PC-3 (cell line): ENCODE measurements at regions of chr12 and their contacts with region 1.

Region 1: GRCh38 chr12:117143008-117143532 is 43.9 kb upstream of the TESC start:
- DNase-seq: peak; percentile 99
- ATAC-seq: peak; percentile 88
- H3K4me3 ChIP-seq: peak overlapping the region; percentile 45
- H3K27ac ChIP-seq: peak overlapping the region; percentile 92
- H3K4me1 ChIP-seq: peaks cover 32% of the 10 kb centered on the region
- H3K27me3 ChIP-seq: no peaks in the 10 kb centered on the region
- CTCF ChIP-seq: no peak

Region 2: GRCh38 chr12:116799955-116800354 is 343.1 kb before region 1 on chr12:
- CTCF ChIA-PET with region 1: no interaction called
- POLR2A ChIA-PET with region 1: no interaction called
- intact Hi-C with region 1: no loop called
- DNase-seq: no peak
- ATAC-seq: no peak
- H3K4me3 ChIP-seq: no peak overlapping the region
- H3K27ac ChIP-seq: no peak overlapping the region
- H3K4me1 ChIP-seq: no peaks in the 10 kb centered on the region
- H3K27me3 ChIP-seq: no peaks in the 10 kb centered on the region
- CTCF ChIP-seq: no peak

Region 3: DNA sequence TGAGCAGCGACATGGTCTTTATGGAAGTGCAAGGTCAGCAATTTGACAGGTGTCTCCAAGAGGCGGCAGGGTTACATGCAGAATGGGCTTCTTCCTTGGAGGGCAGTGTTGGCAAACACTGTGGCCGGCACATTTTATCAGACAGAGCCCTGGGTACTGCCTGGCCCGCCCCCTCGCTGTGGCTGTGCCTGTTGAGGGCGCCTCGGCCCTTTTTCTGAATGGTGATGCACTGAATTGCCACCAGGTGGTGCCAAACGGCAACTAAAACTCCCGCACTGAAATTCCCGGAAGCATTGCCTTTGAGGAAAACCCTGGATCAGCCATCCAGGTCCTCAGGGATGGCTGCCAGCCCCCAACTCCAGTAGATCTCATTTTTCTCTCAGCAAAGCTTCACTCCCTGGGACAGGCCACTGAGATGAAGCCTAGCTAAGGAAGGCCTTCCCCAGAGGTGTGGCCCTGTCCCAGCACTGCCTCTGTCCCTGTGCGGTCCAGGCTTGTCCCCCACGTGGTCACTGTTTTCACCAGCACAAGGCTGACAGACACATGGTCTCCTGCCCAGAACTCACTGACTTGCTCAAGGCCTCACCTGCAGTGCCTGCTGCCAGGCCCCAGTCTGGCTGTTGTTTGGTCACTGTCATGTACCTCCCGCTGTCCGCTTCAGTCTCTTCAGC is 117.5 kb before region 1 on chr12:
- CTCF ChIA-PET with region 1: interaction called, 3 read pairs
- POLR2A ChIA-PET with region 1: no interaction called
- intact Hi-C with region 1: loop called (anchors 5 kb)
- DNase-seq: peak; percentile 82
- ATAC-seq: peak; percentile 92
- H3K4me3 ChIP-seq: no peak overlapping the region
- H3K27ac ChIP-seq: no peak overlapping the region
- H3K4me1 ChIP-seq: no peaks in the 10 kb centered on the region
- H3K27me3 ChIP-seq: no peaks in the 10 kb centered on the region
- CTCF ChIP-seq: peak; percentile 98

Region 4: GRCh38 chr12:117119592-117120198 is 23.4 kb before region 1 on chr12:
- CTCF ChIA-PET with region 1: no interaction called
- POLR2A ChIA-PET with region 1: no interaction called
- intact Hi-C with region 1: no loop called
- DNase-seq: peak; percentile 73
- ATAC-seq: peak; percentile 82
- H3K4me3 ChIP-seq: no peak overlapping the region
- H3K27ac ChIP-seq: no peak overlapping the region
- H3K4me1 ChIP-seq: peaks cover 4% of the 10 kb centered on the region
- H3K27me3 ChIP-seq: no peaks in the 10 kb centered on the region
- CTCF ChIP-seq: peak; percentile 97

Region 5: DNA sequence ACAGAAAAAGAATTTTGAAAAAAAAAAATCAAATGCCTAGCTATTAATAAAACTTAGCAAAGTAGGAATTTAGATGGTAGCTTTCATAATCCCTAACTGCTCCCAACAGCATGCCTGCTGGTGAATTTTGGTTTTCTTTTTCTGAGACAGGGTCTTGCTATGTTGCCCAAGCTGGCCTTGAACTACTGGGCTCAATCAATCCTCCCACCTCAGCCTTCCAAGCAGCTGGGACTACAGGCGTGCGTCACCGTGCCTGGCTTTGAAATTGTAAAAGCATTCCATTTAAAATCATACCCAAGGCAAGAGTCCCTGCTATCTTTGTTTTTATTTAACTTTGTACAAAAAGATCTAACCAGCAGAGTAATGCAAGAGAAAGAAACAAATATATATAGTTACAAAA is 26.5 kb after region 1 on chr12:
- CTCF ChIA-PET with region 1: no interaction called
- POLR2A ChIA-PET with region 1: interaction called, 19 read pairs
- intact Hi-C with region 1: no loop called
- DNase-seq: no peak
- ATAC-seq: no peak
- H3K4me3 ChIP-seq: no peak overlapping the region
- H3K27ac ChIP-seq: no peak overlapping the region
- H3K4me1 ChIP-seq: no peaks in the 10 kb centered on the region
- H3K27me3 ChIP-seq: no peaks in the 10 kb centered on the region
- CTCF ChIP-seq: no peak